Common myeloid progenitor, CD34-positive (primary cell): ENCODE measurements at regions of chr2 and their contacts with region 1.

Region 1: GRCh38 chr2:164910101-164910899 is 45.0 kb downstream of the SLC38A11 start:
- DNase-seq: peak; percentile 84 to 99 (median 97)
- H3K4me3 ChIP-seq: peak overlapping the region in 2 of 7 experiments; percentile 19 to 21
- H3K27ac ChIP-seq: peak overlapping the region; percentile 82 to 86
- H3K4me1 ChIP-seq: peaks cover 10 to 56% (median 29%) of the 10 kb centered on the region in 4 experiments
- H3K27me3 ChIP-seq: no peaks in the 10 kb centered on the region

Region 2: DNA sequence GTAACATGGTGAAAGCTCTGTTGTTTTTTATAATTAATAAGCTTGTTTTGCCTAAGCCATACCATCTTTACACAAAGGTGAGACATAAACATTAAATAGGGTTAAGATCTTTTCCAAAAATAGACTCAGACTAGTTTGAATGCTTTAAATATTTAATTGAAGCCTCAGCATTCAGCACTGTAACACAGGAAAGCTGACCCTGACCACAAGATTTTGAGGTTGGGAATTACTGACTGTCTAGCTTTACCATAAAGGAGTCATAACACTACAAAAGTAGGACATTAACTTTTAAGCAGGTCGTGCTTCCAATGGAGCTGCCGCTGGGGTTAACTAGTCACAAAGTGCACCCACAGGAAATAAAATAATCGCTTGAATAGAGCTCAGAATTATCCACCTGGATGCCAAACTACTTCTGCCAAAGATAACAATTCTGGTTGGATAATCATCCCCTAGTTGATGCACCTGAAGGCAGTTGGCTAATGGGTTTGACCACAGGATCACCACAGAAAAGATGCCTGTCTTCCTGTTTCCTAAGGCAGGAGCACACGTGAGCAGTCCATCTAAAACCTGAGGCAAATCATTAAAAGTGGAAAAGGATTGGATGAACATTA is 174.9 kb before region 1 on chr2:
- CTCF ChIA-PET with region 1: interaction called, 26 read pairs
- POLR2A ChIA-PET with region 1: no interaction called
- DNase-seq: peak in 2 of 3 donors; percentile 29 to 42
- H3K4me3 ChIP-seq: no peak overlapping the region
- H3K27ac ChIP-seq: no peak overlapping the region
- H3K4me1 ChIP-seq: peaks cover 0 to 12% (median 7%) of the 10 kb centered on the region in 4 experiments
- H3K27me3 ChIP-seq: no peaks in the 10 kb centered on the region

Region 3: DNA sequence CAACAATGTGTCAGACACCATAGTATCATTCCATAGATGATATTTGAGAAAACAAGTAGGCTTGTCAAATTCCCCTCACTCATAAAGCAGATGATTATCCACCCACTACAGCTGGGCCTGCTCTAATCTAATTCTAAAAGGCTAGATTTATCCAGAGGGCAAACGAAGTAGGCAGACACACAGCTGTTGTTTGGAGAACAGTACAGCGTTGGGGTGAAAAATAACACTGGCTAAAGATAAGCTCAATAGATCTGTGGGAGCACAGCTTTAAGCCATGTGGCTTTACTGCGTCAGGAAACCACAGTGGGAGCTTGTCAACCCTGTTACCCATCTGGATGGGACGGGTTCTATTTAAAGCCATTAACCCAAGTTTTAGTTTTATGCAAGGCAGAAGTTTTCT is 19.8 kb before region 1 on chr2:
- CTCF ChIA-PET with region 1: interaction called, 16 read pairs
- POLR2A ChIA-PET with region 1: interaction called, 3 read pairs
- DNase-seq: peak; percentile 31 to 88 (median 82)
- H3K4me3 ChIP-seq: no peak overlapping the region
- H3K27ac ChIP-seq: peak overlapping the region in 1 of 2 experiments; percentile 23
- H3K4me1 ChIP-seq: peaks cover 12 to 33% (median 25%) of the 10 kb centered on the region in 4 experiments
- H3K27me3 ChIP-seq: no peaks in the 10 kb centered on the region

Region 4: GRCh38 chr2:164981217-164981990 is 71.1 kb after region 1 on chr2:
- CTCF ChIA-PET with region 1: no interaction called
- POLR2A ChIA-PET with region 1: no interaction called
- DNase-seq: peak in 1 of 3 donors; percentile 15
- H3K4me3 ChIP-seq: no peak overlapping the region
- H3K27ac ChIP-seq: no peak overlapping the region
- H3K4me1 ChIP-seq: peaks cover 6 to 31% (median 12%) of the 10 kb centered on the region in 4 experiments
- H3K27me3 ChIP-seq: no peaks in the 10 kb centered on the region